ENCODE measurements at regions of chr14 and their contacts with region 1.

Region 1: GRCh38 chr14:85934123-85934885 is 404.4 kb downstream of the FLRT2 start:
- DNase-seq: peak; percentile 20 to 82 (median 75)
- ATAC-seq: peak; percentile 88
- H3K4me3 ChIP-seq: peak overlapping the region; percentile 65
- H3K4me3 Mint-ChIP-seq: peak overlapping the region; percentile 79 to 98 (median 94)
- H3K27ac ChIP-seq: peak overlapping the region; percentile 75
- H3K27ac Mint-ChIP-seq: peak overlapping the region; percentile 92 to 99 (median 95)
- H3K4me1 ChIP-seq: peaks cover 8 to 9% of the 10 kb centered on the region in 2 donors
- H3K4me1 Mint-ChIP-seq: peaks cover 21 to 58% (median 40%) of the 10 kb centered on the region in 7 donors
- H3K27me3 ChIP-seq: no peaks in the 10 kb centered on the region
- H3K27me3 Mint-ChIP-seq: no peaks in the 10 kb centered on the region

Region 2: GRCh38 chr14:85948153-85948552 is 13.8 kb after region 1 on chr14:
- CTCF ChIA-PET with region 1: no interaction called
- POLR2A ChIA-PET with region 1: no interaction called
- intact Hi-C with region 1: loop called in 1 of 2 experiments (anchors 2 kb)
- DNase-seq: no peak
- ATAC-seq: peak; percentile 26
- H3K4me3 ChIP-seq: no peak overlapping the region
- H3K4me3 Mint-ChIP-seq: peak overlapping the region in 1 of 10 donors; percentile 38
- H3K27ac ChIP-seq: no peak overlapping the region
- H3K27ac Mint-ChIP-seq: no peak overlapping the region
- H3K4me1 ChIP-seq: no peaks in the 10 kb centered on the region
- H3K4me1 Mint-ChIP-seq: peaks cover 0 to 31% (median 22%) of the 10 kb centered on the region in 7 donors
- H3K27me3 ChIP-seq: no peaks in the 10 kb centered on the region
- H3K27me3 Mint-ChIP-seq: no peaks in the 10 kb centered on the region

Region 3: DNA sequence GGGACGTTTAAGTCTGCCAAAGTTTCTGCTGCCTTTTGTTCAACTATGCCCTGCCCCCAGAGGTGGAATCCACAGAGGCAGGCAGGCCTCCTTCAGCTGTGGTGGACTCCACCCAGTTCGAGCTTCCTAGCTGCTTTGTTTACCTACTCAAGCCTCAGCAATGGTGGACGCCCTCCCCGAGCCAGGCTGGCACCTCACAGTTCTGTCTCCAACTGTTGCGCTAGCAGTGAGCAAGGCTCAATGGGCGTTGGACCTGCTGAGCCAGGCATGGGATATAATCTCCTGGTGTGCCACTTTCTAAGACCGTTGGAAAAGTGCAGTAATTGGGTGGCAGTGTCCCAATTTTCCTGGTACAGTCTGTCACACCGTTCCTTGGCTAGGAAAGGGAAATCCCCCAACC is 40.3 kb after region 1 on chr14:
- CTCF ChIA-PET with region 1: no interaction called
- POLR2A ChIA-PET with region 1: no interaction called
- intact Hi-C with region 1: no loop called
- DNase-seq: no peak
- ATAC-seq: no peak
- H3K4me3 ChIP-seq: no peak overlapping the region
- H3K4me3 Mint-ChIP-seq: no peak overlapping the region
- H3K27ac ChIP-seq: no peak overlapping the region
- H3K27ac Mint-ChIP-seq: no peak overlapping the region
- H3K4me1 ChIP-seq: no peaks in the 10 kb centered on the region
- H3K4me1 Mint-ChIP-seq: peaks cover 0 to 17% (median 9%) of the 10 kb centered on the region in 7 donors
- H3K27me3 ChIP-seq: no peaks in the 10 kb centered on the region
- H3K27me3 Mint-ChIP-seq: no peaks in the 10 kb centered on the region

Region 4: DNA sequence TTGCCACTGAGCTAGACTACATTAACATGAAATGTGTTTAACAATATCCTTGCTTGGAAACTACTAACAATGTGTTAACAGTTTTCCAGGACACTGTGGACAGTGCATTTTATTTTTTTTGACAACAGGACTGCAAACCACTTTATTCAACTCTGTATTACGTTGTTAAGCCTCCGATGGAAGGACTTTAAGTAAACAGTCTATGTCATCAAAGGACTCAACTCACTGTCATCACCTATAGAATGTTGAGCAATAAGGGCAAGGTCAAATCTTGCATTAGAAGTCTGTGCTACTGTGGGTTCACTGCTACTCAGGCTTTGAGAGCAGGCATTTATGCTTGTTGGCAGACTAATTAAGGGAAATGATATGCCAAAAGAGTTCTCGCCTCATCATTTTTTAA is 79.3 kb after region 1 on chr14:
- CTCF ChIA-PET with region 1: no interaction called
- POLR2A ChIA-PET with region 1: no interaction called
- intact Hi-C with region 1: no loop called
- DNase-seq: no peak
- ATAC-seq: no peak
- H3K4me3 ChIP-seq: no peak overlapping the region
- H3K4me3 Mint-ChIP-seq: no peak overlapping the region
- H3K27ac ChIP-seq: no peak overlapping the region
- H3K27ac Mint-ChIP-seq: no peak overlapping the region
- H3K4me1 ChIP-seq: no peaks in the 10 kb centered on the region
- H3K4me1 Mint-ChIP-seq: no peaks in the 10 kb centered on the region
- H3K27me3 ChIP-seq: no peaks in the 10 kb centered on the region
- H3K27me3 Mint-ChIP-seq: no peaks in the 10 kb centered on the region

Measured in naive thymus-derived CD4-positive, alpha-beta T cell (primary cell).